T-cell (primary cell): ENCODE measurements at regions of chr16 and their contacts with region 1.

Region 1: GRCh38 chr16:50681021-50681885 is at the start of gene SNX20:
- DNase-seq: peak; percentile 44 to 82 (median 68)
- ATAC-seq: peak; percentile 81 to 89 (median 86)
- H3K4me3 ChIP-seq: peak within 1 kb of the TSS; percentile 89 to 100
- H3K4me3 Mint-ChIP-seq: peak within 1 kb of the TSS; percentile 90 to 94 (median 94)
- H3K27ac ChIP-seq: peak within 1 kb of the TSS; percentile 76
- H3K27ac Mint-ChIP-seq: peak within 1 kb of the TSS; percentile 98 to 99
- H3K4me1 ChIP-seq: peaks cover 62 to 94% of the 10 kb centered on the region in 2 experiments
- H3K4me1 Mint-ChIP-seq: peaks cover 90 to 95% (median 92%) of the 10 kb centered on the region in 3 donors
- H3K27me3 ChIP-seq: no peaks in the 10 kb centered on the region
- H3K27me3 Mint-ChIP-seq: no peaks in the 10 kb centered on the region
- total RNA-seq, gene SNX20: 38.8 to 85.2 (median 69.6) TPM

Region 2: GRCh38 chr16:50702725-50703124 is 21.5 kb after region 1 on chr16:
- CTCF ChIA-PET with region 1: no interaction called
- POLR2A ChIA-PET with region 1: no interaction called
- DNase-seq: no peak
- ATAC-seq: no peak
- H3K4me3 ChIP-seq: no peak overlapping the region
- H3K4me3 Mint-ChIP-seq: no peak overlapping the region
- H3K27ac ChIP-seq: no peak overlapping the region
- H3K27ac Mint-ChIP-seq: peak overlapping the region in 1 of 2 donors; percentile 58
- H3K4me1 ChIP-seq: peaks cover 0 to 29% of the 10 kb centered on the region in 2 experiments
- H3K4me1 Mint-ChIP-seq: peaks cover 36 to 74% (median 36%) of the 10 kb centered on the region in 3 donors
- H3K27me3 ChIP-seq: no peaks in the 10 kb centered on the region
- H3K27me3 Mint-ChIP-seq: no peaks in the 10 kb centered on the region

Region 3: DNA sequence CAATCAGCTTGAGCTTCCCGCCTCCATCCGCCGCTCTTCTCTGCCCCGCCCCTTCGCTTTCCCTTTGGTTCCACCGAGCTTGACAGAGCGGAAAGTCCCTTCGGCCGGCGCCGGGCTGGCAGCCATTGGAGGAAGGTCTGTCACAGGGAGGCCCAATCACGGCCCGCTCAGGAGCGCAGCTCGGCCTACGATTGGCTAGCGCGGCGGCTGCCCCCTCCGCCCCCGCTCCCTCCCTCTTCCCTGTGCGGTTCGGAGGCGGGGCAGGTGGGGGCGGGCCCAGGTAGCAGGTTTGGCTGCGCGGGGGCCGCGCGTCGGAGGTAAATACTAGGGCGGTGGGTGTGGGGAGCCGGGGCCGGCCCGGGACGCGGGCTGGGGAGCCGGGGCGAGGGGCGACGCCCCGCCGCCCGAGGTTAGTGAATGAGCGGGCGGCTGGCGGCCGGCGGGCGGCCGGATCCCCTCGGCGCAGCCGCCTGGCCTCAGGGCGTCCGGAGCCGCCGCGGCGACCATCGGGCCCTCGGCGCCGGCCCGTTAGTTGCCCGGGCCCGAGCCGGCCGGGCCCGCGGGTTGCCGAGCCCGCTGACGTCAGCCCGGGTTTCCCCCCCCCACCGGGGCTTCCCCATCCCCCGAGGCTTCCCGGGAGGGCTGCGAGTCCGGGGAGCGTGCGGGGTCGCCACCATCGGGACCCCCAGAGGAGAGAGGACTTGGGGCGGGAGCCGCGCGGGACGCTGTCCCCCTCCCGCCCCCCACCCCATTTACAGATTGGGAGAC is 60.7 kb after region 1 on chr16 and contains the start of gene CYLD:
- CTCF ChIA-PET with region 1: interaction called in 1 of 2 experiments, 17 read pairs
- POLR2A ChIA-PET with region 1: interaction called, 7 to 11 read pairs
- DNase-seq: peak; percentile 93 to 100 (median 100)
- ATAC-seq: peak; percentile 90
- H3K4me3 ChIP-seq: peak within 1 kb of the TSS; percentile 95 to 99
- H3K4me3 Mint-ChIP-seq: peak within 1 kb of the TSS; percentile 93 to 98 (median 95)
- H3K27ac ChIP-seq: peak within 1 kb of the TSS; percentile 100
- H3K27ac Mint-ChIP-seq: peak within 1 kb of the TSS; percentile 97 to 98
- H3K4me1 ChIP-seq: peaks cover 17 to 26% of the 10 kb centered on the region in 2 experiments
- H3K4me1 Mint-ChIP-seq: peaks cover 40 to 58% (median 52%) of the 10 kb centered on the region in 3 donors
- H3K27me3 ChIP-seq: no peaks in the 10 kb centered on the region
- H3K27me3 Mint-ChIP-seq: no peaks in the 10 kb centered on the region
- total RNA-seq, gene CYLD: 243 to 380 (median 294) TPM

Region 4: GRCh38 chr16:50747207-50747956 is 66.1 kb after region 1 on chr16:
- CTCF ChIA-PET with region 1: interaction called in 1 of 2 experiments, 17 read pairs
- POLR2A ChIA-PET with region 1: interaction called, 4 to 7 read pairs
- DNase-seq: peak in 13 of 35 experiments; percentile 7 to 77 (median 30)
- ATAC-seq: peak; percentile 74 to 79 (median 77)
- H3K4me3 ChIP-seq: peak overlapping the region; percentile 15 to 37
- H3K4me3 Mint-ChIP-seq: peak overlapping the region; percentile 72 to 98 (median 81)
- H3K27ac ChIP-seq: peak overlapping the region; percentile 100
- H3K27ac Mint-ChIP-seq: peak overlapping the region; percentile 95 to 97
- H3K4me1 ChIP-seq: peaks cover 16 to 62% of the 10 kb centered on the region in 2 experiments
- H3K4me1 Mint-ChIP-seq: peaks cover 71 to 77% (median 76%) of the 10 kb centered on the region in 3 donors
- H3K27me3 ChIP-seq: no peaks in the 10 kb centered on the region
- H3K27me3 Mint-ChIP-seq: no peaks in the 10 kb centered on the region

Region 5: DNA sequence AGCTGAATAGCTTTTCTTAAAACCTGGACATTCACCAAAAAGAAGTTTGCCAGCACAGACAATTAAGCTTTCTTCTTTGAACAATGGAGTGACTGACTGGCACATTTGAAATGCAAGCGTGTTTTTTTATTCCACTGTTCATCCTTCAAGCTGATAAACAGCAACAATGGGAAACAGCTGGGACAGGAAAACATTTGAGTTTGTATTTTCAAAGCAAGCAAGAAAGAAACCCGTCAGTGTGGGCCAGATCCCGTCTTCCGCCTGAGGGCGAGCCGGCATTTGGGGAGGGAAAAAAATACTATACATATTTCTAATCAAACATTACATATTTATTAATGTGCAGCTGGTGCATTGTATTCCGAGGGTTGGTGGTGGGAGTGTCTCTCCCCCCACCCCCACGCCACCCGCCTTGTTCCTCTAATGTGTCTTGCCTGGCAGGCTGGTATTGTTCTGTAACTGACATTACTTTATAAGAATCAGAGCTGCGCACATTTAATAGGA is 154.9 kb after region 1 on chr16:
- CTCF ChIA-PET with region 1: no interaction called
- POLR2A ChIA-PET with region 1: interaction called in 1 of 2 experiments, 10 read pairs
- DNase-seq: no peak
- ATAC-seq: no peak
- H3K4me3 ChIP-seq: no peak overlapping the region
- H3K4me3 Mint-ChIP-seq: no peak overlapping the region
- H3K27ac ChIP-seq: no peak overlapping the region
- H3K27ac Mint-ChIP-seq: no peak overlapping the region
- H3K4me1 ChIP-seq: peaks cover 2 to 6% of the 10 kb centered on the region in 2 experiments
- H3K4me1 Mint-ChIP-seq: peaks cover 10 to 11% (median 10%) of the 10 kb centered on the region in 3 donors
- H3K27me3 ChIP-seq: peaks cover 0 to 34% of the 10 kb centered on the region in 2 experiments
- H3K27me3 Mint-ChIP-seq: peaks cover 6 to 12% of the 10 kb centered on the region in 2 donors